ENCODE measurements at regions of chr12 and their contacts with region 1.

Region 1: GRCh38 chr12:79547735-79548609 is 142.8 kb downstream of the PAWR start:
- DNase-seq: peak; percentile 95
- H3K4me3 ChIP-seq: peak overlapping the region in 1 of 3 experiments; percentile 37
- H3K27ac ChIP-seq: peak overlapping the region; percentile 99
- H3K4me1 ChIP-seq: peaks cover 55% of the 10 kb centered on the region
- H3K27me3 ChIP-seq: no peaks in the 10 kb centered on the region
- CTCF ChIP-seq: peak; percentile 58 to 74
- POLR2A ChIP-seq: peak; percentile 69

Region 2: GRCh38 chr12:79514730-79515529 is 33.0 kb before region 1 on chr12:
- CTCF ChIA-PET with region 1: no interaction called
- POLR2A ChIA-PET with region 1: no interaction called
- dilution Hi-C with region 1: no loop called
- intact Hi-C with region 1: loop called (anchors 1 kb)
- DNase-seq: peak; percentile 88
- H3K4me3 ChIP-seq: no peak overlapping the region
- H3K27ac ChIP-seq: peak overlapping the region; percentile 75
- H3K4me1 ChIP-seq: peaks cover 14% of the 10 kb centered on the region
- H3K27me3 ChIP-seq: no peaks in the 10 kb centered on the region
- CTCF ChIP-seq: no peak
- POLR2A ChIP-seq: peak; percentile 62

Region 3: DNA sequence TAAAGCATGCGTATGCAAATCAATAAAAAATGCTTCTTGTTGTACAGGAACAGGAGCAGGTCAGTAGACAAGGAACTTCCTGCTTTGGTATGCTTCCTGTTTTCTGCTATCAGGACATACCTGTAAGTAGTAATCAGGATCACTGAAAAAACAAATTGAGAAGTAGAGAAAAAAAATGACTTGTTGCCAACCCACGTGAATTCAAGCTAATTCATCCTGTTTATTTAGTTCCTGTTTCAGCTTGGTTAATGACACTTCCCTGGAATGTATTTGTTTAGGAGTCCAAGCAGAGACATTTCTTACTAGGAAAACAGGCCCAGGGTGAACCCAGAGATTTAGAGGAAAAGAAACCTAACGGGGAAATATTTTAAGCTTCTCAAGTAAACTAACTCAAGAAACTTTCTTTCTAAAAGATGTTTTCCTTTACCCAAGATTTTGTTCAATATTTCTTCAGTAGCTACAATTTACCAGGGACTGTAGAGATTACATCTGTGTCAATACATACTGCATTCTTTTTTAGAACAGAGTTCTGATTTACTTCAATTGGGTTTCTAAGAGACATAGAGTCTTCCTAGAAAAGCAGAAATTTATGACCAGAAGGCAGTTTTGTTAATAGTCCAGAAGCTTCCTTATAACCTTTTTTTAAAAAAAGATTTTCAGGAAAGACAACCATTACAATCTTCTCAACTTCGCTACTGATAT is 18.7 kb after region 1 on chr12:
- CTCF ChIA-PET with region 1: interaction called, 6 read pairs
- POLR2A ChIA-PET with region 1: interaction called, 4 read pairs
- dilution Hi-C with region 1: no loop called
- intact Hi-C with region 1: loop called (anchors 1 kb)
- DNase-seq: peak; percentile 89
- H3K4me3 ChIP-seq: no peak overlapping the region
- H3K27ac ChIP-seq: peak overlapping the region; percentile 65
- H3K4me1 ChIP-seq: peaks cover 28% of the 10 kb centered on the region
- H3K27me3 ChIP-seq: no peaks in the 10 kb centered on the region
- CTCF ChIP-seq: no peak
- POLR2A ChIP-seq: peak; percentile 53

Region 4: GRCh38 chr12:79737875-79738718 is 190.1 kb after region 1 on chr12:
- CTCF ChIA-PET with region 1: interaction called, 5 read pairs
- POLR2A ChIA-PET with region 1: no interaction called
- dilution Hi-C with region 1: no loop called
- intact Hi-C with region 1: loop called (anchors 1 kb)
- DNase-seq: peak; percentile 80
- H3K4me3 ChIP-seq: no peak overlapping the region
- H3K27ac ChIP-seq: no peak overlapping the region
- H3K4me1 ChIP-seq: no peaks in the 10 kb centered on the region
- H3K27me3 ChIP-seq: no peaks in the 10 kb centered on the region
- CTCF ChIP-seq: peak; percentile 48 to 49
- POLR2A ChIP-seq: no peak

Region 5: GRCh38 chr12:80056845-80057244 is 508.9 kb after region 1 on chr12:
- CTCF ChIA-PET with region 1: no interaction called
- POLR2A ChIA-PET with region 1: no interaction called
- dilution Hi-C with region 1: no loop called
- intact Hi-C with region 1: loop called (anchors 5 kb)
- DNase-seq: peak; percentile 98
- H3K4me3 ChIP-seq: no peak overlapping the region
- H3K27ac ChIP-seq: no peak overlapping the region
- H3K4me1 ChIP-seq: peaks cover 15% of the 10 kb centered on the region
- H3K27me3 ChIP-seq: peaks cover 0 to 2% of the 10 kb centered on the region in 2 experiments
- CTCF ChIP-seq: no peak
- POLR2A ChIP-seq: no peak

Measured in endothelial cell of umbilical vein (primary cell).